MCF 10A (cell line): ENCODE measurements at regions of chr17 and their contacts with region 1.

Region 1: DNA sequence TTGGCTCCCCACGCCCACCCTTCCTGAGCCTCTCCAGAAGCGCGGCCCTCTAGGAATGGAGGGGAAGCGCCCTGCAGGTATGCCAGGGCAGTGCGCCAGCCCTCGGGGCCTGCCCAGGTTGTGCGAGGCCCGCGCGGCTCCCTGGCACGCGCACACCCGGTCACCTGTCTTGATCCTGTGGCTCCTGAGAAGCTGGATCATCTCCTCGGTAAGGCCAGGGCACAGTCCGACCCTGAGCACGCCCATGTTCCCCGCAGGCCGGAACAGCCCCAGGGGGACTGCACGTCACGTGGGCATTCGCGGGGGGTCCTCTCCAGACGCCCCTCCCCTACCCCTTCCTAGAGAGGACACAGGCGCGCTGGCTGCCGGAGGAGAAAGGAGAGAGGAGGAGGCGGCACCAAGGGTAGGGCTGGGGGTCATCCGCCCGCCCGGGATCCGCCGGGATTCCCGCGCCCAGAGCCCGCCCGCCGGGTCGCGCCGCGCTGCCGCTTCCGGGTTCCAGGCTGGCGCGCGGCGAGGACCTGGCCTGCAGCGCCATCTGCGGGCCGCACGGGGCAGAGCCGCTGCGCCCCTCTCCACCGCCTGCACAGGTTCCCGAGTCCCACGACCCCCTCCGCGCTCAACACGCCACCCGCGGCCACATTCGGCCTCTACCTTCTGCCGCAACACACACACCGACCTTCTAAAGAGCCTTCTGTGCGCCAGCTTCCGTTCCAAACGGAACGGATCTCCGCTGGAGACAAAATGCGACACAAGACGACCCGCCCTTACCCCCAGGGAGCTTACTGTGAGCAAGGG is at the start of gene RAD51D:
- DNase-seq: peak; percentile 65
- H3K4me3 Mint-ChIP-seq: peak within 1 kb of the TSS; percentile 78
- H3K27ac Mint-ChIP-seq: peak within 1 kb of the TSS; percentile 89
- H3K4me1 Mint-ChIP-seq: peaks cover 23% of the 10 kb centered on the region
- H3K27me3 Mint-ChIP-seq: no peaks in the 10 kb centered on the region
- CTCF ChIP-seq: peak; percentile 94
- total RNA-seq, gene RAD51D: 9.6 and 13.0 TPM in 2 replicates

Region 2: DNA sequence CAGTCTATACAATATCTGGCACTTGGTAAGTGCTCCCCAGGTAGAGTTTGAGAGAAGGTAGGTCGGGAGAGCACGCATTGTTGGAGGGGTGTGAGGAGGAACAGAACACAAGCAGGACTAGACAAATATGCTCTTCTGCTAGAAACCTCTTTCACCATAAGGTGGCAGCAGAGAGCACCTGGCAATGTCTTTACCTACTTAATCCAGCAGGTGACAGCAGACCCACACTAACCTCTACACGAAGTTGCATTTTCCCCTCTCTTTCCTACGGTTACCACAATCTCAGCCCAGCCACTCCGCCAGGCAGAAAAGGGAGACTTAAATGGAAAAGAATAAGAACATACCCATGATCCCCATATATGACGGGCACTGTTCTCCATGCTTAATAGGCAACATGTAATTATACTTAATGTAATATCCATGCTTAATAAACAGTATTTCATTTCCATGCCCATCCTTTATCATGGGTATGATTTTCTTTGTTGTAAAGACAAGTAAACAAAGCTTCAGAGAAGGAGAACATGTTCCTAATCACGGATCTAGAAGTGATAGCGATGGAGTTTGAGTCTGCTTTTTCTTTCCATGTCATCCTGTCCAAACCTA is 919.5 kb before region 1 on chr17:
- CTCF ChIA-PET with region 1: interaction called, 7 read pairs
- POLR2A ChIA-PET with region 1: no interaction called
- intact Hi-C with region 1: loop called (anchors 5 kb)
- DNase-seq: peak; percentile 79
- H3K4me3 Mint-ChIP-seq: no peak overlapping the region
- H3K27ac Mint-ChIP-seq: no peak overlapping the region
- H3K4me1 Mint-ChIP-seq: no peaks in the 10 kb centered on the region
- H3K27me3 Mint-ChIP-seq: peaks cover 15% of the 10 kb centered on the region
- CTCF ChIP-seq: peak; percentile 100

Region 3: GRCh38 chr17:34443619-34444469 is 675.7 kb before region 1 on chr17:
- CTCF ChIA-PET with region 1: interaction called, 14 read pairs
- POLR2A ChIA-PET with region 1: interaction called, 3 read pairs
- intact Hi-C with region 1: no loop called
- DNase-seq: no peak
- H3K4me3 Mint-ChIP-seq: no peak overlapping the region
- H3K27ac Mint-ChIP-seq: no peak overlapping the region
- H3K4me1 Mint-ChIP-seq: no peaks in the 10 kb centered on the region
- H3K27me3 Mint-ChIP-seq: no peaks in the 10 kb centered on the region
- CTCF ChIP-seq: peak; percentile 36

Region 4: DNA sequence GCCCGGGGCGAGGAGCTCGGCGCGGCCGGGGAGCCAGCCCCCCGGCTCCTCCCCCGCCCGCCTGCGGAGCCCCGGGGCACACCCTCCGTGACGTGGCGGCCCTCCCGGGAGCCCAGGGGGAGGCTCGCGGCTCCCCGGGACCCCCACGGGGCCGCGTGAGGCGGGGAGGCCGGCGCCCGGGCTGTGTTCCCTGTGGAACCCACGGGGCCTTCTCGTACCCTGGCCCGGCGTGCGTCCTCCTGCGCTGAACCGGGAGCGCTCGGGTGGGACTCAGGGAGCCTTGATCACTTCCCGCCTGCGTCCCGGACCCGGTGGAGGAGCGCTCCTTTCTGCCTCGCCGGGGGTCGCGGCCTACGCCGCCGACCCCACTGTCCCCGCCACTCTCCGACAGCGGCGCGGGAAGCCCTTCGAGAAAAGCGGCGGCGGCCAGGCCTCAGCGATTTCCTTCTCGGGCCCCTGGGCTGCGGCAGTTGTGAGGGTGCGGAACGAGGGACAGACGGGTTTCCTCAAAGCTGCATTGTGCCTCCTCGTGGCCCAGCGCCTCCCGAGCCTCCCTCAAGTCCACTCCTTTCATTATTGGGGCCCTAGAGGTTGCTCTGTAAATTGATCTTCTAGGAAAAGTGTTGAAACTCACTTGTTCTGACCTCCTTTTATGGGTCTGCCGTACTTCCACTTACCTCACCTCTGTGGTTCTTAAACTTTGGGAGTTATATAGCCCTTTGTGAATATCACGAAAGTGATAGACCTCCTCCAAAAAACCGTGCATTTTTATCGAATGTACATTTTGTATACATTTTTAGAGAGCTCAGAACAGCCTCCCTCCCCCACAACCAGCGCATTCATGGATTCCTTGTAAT is 138.7 kb before region 1 on chr17:
- CTCF ChIA-PET with region 1: interaction called, 12 read pairs
- POLR2A ChIA-PET with region 1: interaction called, 5 read pairs
- intact Hi-C with region 1: no loop called
- DNase-seq: peak; percentile 83
- H3K4me3 Mint-ChIP-seq: peak overlapping the region; percentile 75
- H3K27ac Mint-ChIP-seq: peak overlapping the region; percentile 89
- H3K4me1 Mint-ChIP-seq: peaks cover 27% of the 10 kb centered on the region
- H3K27me3 Mint-ChIP-seq: no peaks in the 10 kb centered on the region
- CTCF ChIP-seq: peak; percentile 39

Region 5: GRCh38 chr17:34998205-34998604 is 121.4 kb before region 1 on chr17:
- CTCF ChIA-PET with region 1: interaction called, 97 read pairs
- POLR2A ChIA-PET with region 1: interaction called, 4 read pairs
- intact Hi-C with region 1: loop called (anchors 1 kb)
- DNase-seq: peak; percentile 64
- H3K4me3 Mint-ChIP-seq: no peak overlapping the region
- H3K27ac Mint-ChIP-seq: no peak overlapping the region
- H3K4me1 Mint-ChIP-seq: no peaks in the 10 kb centered on the region
- H3K27me3 Mint-ChIP-seq: no peaks in the 10 kb centered on the region
- CTCF ChIP-seq: peak; percentile 85

Region 6: GRCh38 chr17:35088881-35089585 is 30.5 kb before region 1 on chr17:
- CTCF ChIA-PET with region 1: interaction called, 24 read pairs
- POLR2A ChIA-PET with region 1: interaction called, 8 read pairs
- intact Hi-C with region 1: loop called (anchors 1 kb)
- DNase-seq: peak; percentile 83
- H3K4me3 Mint-ChIP-seq: peak overlapping the region; percentile 80
- H3K27ac Mint-ChIP-seq: peak overlapping the region; percentile 84
- H3K4me1 Mint-ChIP-seq: peaks cover 11% of the 10 kb centered on the region
- H3K27me3 Mint-ChIP-seq: no peaks in the 10 kb centered on the region
- CTCF ChIP-seq: peak; percentile 72

Region 7: DNA sequence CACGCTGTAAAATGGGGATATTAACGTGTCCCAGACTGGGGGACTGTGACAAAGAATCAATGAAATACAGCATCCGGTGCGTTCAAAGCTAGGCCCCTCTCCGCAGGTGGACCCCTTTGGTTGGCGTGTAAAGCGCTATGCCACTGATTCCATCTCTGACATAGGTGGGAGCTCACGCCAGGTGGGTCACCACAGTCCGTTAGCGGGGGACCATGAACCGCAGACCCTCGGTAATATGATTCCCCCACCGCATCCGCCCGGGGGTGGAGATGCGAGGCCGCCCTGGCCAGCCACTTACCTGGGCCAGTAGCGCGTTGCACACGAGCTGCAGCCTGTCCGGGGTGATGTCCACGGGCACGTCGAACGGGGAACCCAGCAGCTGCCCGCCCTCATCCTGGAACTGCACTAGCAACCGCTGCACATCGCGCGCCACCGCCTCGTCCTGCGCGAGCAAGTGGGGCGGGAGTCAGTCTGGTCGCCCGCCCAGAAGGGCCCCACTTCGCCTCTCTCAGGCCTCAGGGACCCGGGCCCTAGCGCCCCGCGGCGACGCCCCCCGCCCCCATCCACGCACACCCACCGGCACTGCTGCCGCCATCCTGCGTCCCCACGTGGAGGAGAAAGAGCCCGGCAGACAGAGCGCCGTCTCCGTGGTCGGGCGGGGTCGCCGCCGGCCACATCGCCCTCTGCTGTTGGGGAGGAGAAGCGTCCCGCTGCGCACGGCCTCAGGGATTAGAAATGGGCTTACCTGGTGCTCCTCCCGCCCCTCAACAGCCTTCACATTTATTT is 22.3 kb after region 1 on chr17 and contains the start of gene NLE1:
- CTCF ChIA-PET with region 1: interaction called, 15 read pairs
- POLR2A ChIA-PET with region 1: interaction called, 3 read pairs
- intact Hi-C with region 1: no loop called
- DNase-seq: peak; percentile 73
- H3K4me3 Mint-ChIP-seq: peak within 1 kb of the TSS; percentile 73
- H3K27ac Mint-ChIP-seq: no peak within 1 kb of the TSS
- H3K4me1 Mint-ChIP-seq: peaks cover 4% of the 10 kb centered on the region
- H3K27me3 Mint-ChIP-seq: no peaks in the 10 kb centered on the region
- CTCF ChIP-seq: peak; percentile 96
- total RNA-seq, gene NLE1: 24.3 and 36.2 TPM in 2 replicates

Region 8: DNA sequence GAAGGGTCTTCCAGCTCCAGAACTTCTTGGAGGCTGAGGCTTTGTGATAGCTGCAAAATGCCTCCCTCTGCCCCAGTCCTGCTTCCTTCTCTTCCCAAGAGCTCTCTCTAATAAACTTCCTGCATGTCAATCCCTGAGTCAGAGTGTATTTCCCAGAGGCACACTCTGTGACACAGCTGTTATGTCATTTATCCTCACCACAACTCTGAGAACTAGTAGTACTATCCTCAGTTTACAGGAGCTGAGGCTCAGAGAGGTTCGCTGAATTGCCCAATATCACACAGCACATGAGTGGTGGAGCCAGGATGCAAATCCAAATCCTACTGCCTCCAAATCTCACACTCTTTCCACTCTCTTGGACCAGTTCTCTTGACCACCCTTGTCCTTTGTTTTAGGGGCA is 48.1 kb after region 1 on chr17:
- CTCF ChIA-PET with region 1: no interaction called
- POLR2A ChIA-PET with region 1: no interaction called
- intact Hi-C with region 1: no loop called
- DNase-seq: peak; percentile 7
- H3K4me3 Mint-ChIP-seq: no peak overlapping the region
- H3K27ac Mint-ChIP-seq: no peak overlapping the region
- H3K4me1 Mint-ChIP-seq: peaks cover 5% of the 10 kb centered on the region
- H3K27me3 Mint-ChIP-seq: no peaks in the 10 kb centered on the region
- CTCF ChIP-seq: no peak